A549 (cell line): ENCODE measurements at regions of chr11 and their contacts with region 1.

Region 1: DNA sequence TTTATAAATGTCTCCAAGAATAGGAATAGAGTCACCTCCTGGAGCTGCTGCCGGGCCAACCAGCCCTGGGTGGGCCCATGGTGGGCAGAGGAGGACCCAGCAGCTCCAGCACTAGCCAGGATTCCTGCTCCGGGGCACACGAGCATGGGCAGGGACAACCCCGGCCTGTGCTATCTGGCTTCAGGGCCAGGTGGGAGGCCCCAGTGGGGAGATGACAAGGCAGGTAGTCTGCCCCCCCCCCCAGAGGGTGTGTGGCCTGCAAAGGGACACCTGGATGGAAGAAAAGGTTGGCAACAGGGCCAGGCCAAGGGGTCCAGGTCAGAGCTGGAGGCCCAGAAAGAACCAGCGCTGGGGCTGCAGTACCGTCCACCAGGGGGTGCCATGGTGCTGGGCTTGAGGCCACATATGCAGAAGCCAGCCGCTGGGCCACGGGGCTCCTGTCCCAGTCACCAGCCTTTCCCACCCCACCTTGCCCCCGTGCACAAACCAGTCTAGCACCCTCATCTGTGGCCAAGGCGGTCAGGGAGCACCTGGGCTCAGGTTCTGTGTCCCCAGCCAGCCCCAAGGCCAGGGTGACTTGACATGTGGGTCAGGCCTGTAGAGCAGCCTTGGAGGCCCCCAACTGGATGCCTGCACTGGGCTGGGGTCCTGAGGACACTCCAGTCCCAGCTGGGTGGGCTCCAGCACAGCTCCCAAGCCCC is 3.5 kb downstream of the TSPAN32 start:
- DNase-seq: peak; percentile 58 to 62
- ATAC-seq: peak; percentile 77 to 92
- H3K4me3 ChIP-seq: no peak overlapping the region
- H3K27ac ChIP-seq: no peak overlapping the region
- H3K4me1 ChIP-seq: no peaks in the 10 kb centered on the region
- CTCF ChIP-seq: peak; percentile 81
- EP300 ChIP-seq: no peak
- POLR2A ChIP-seq: no peak
- RAD21 ChIP-seq: peak; percentile 92 to 93

Region 2: GRCh38 chr11:1541474-1542204 is 763.7 kb before region 1 on chr11:
- CTCF ChIA-PET with region 1: no interaction called
- POLR2A ChIA-PET with region 1: no interaction called
- DNase-seq: no peak
- ATAC-seq: peak; percentile 11 to 39; a peak in 3 of 6 replicates
- H3K4me3 ChIP-seq: no peak overlapping the region
- H3K27ac ChIP-seq: no peak overlapping the region
- H3K4me1 ChIP-seq: no peaks in the 10 kb centered on the region
- CTCF ChIP-seq: no peak
- EP300 ChIP-seq: no peak
- POLR2A ChIP-seq: no peak
- RAD21 ChIP-seq: no peak

Region 3: GRCh38 chr11:2196970-2197770 is 108.1 kb before region 1 on chr11:
- CTCF ChIA-PET with region 1: interaction called, 138 read pairs
- POLR2A ChIA-PET with region 1: no interaction called
- DNase-seq: peak; percentile 75 to 80
- ATAC-seq: peak; percentile 72 to 92
- H3K4me3 ChIP-seq: no peak overlapping the region
- H3K27ac ChIP-seq: no peak overlapping the region
- H3K4me1 ChIP-seq: no peaks in the 10 kb centered on the region
- CTCF ChIP-seq: peak; percentile 82
- EP300 ChIP-seq: no peak
- POLR2A ChIP-seq: no peak
- RAD21 ChIP-seq: peak; percentile 94

Region 4: GRCh38 chr11:2277933-2278523 is 27.3 kb before region 1 on chr11:
- CTCF ChIA-PET with region 1: interaction called, 14 read pairs
- POLR2A ChIA-PET with region 1: no interaction called
- DNase-seq: no peak
- ATAC-seq: no peak; a peak in 2 of 6 replicates
- H3K4me3 ChIP-seq: no peak overlapping the region
- H3K27ac ChIP-seq: no peak overlapping the region
- H3K4me1 ChIP-seq: no peaks in the 10 kb centered on the region
- CTCF ChIP-seq: no peak
- EP300 ChIP-seq: no peak
- POLR2A ChIP-seq: no peak
- RAD21 ChIP-seq: no peak

Region 5: GRCh38 chr11:2325719-2326118 is 20.4 kb after region 1 on chr11:
- CTCF ChIA-PET with region 1: interaction called, 63 read pairs
- POLR2A ChIA-PET with region 1: no interaction called
- DNase-seq: no peak
- ATAC-seq: no peak
- H3K4me3 ChIP-seq: no peak overlapping the region
- H3K27ac ChIP-seq: no peak overlapping the region
- H3K4me1 ChIP-seq: no peaks in the 10 kb centered on the region
- CTCF ChIP-seq: no peak
- EP300 ChIP-seq: no peak
- POLR2A ChIP-seq: no peak
- RAD21 ChIP-seq: no peak

Region 6: GRCh38 chr11:2382936-2383851 is 77.9 kb after region 1 on chr11:
- CTCF ChIA-PET with region 1: interaction called, 14 read pairs
- POLR2A ChIA-PET with region 1: interaction called, 7 read pairs
- DNase-seq: no peak
- ATAC-seq: peak in 1 of 2 experiments; percentile 32; a peak in 3 of 6 replicates
- H3K4me3 ChIP-seq: no peak overlapping the region
- H3K27ac ChIP-seq: peak overlapping the region in 1 of 2 experiments; percentile 58; a peak in 1 of 6 replicates
- H3K4me1 ChIP-seq: peaks cover 44% of the 10 kb centered on the region
- CTCF ChIP-seq: no peak
- EP300 ChIP-seq: no peak
- POLR2A ChIP-seq: no peak
- RAD21 ChIP-seq: no peak

Region 7: GRCh38 chr11:2400069-2400760 is 94.9 kb after region 1 on chr11 and contains the start of gene TSSC4:
- CTCF ChIA-PET with region 1: interaction called, 903 read pairs
- POLR2A ChIA-PET with region 1: no interaction called
- DNase-seq: peak; percentile 99 to 100
- ATAC-seq: peak; percentile 86 to 93
- H3K4me3 ChIP-seq: peak within 1 kb of the TSS; percentile 100
- H3K27ac ChIP-seq: peak within 1 kb of the TSS; percentile 97 to 98
- H3K4me1 ChIP-seq: peaks cover 16% of the 10 kb centered on the region
- CTCF ChIP-seq: peak; percentile 91
- EP300 ChIP-seq: no peak
- POLR2A ChIP-seq: peak; percentile 89
- RAD21 ChIP-seq: peak; percentile 60 to 66
- polyA plus RNA-seq, gene TSSC4: 21.8 and 22.2 TPM in 2 replicates